ENCODE measurements at regions of chr9 and their contacts with region 1.

Region 1: DNA sequence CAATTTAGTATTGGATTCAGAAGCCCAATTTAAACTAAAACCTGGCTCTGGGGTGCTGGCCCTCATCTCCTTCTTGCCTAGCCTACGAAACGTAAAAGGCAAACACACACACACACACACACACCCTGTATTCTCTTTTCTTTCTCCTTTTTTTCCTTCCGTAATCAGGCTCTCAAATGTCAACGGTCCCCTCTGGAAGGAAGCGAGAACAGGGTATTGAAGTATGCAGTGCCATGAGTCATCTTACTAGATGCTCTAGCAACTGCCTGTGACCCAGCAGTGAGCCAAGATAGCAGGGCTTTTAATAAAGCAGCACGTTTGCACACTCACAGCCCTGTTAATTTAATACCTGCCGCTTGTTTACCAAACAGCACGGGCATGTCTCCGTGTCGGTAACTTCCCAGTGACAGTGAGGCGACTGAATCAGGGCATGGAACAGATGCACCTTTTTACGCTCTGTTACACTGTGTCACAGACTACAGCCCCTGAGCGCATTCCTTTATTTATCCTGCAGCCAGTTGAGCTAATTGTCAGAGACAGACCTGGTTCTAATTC is 243.8 kb downstream of the BNC2 start:
- DNase-seq: no peak
- H3K4me3 ChIP-seq: no peak overlapping the region
- H3K27ac ChIP-seq: no peak overlapping the region
- H3K4me1 ChIP-seq: no peaks in the 10 kb centered on the region
- H3K27me3 ChIP-seq: no peaks in the 10 kb centered on the region
- CTCF ChIP-seq: no peak

Region 2: GRCh38 chr9:16247188-16247875 is 379.3 kb before region 1 on chr9:
- dilution Hi-C with region 1: loop called (anchors 25 kb)
- DNase-seq: peak; percentile 36
- H3K4me3 ChIP-seq: no peak overlapping the region
- H3K27ac ChIP-seq: no peak overlapping the region
- H3K4me1 ChIP-seq: peaks cover 9% of the 10 kb centered on the region
- H3K27me3 ChIP-seq: no peaks in the 10 kb centered on the region
- CTCF ChIP-seq: no peak

Region 3: DNA sequence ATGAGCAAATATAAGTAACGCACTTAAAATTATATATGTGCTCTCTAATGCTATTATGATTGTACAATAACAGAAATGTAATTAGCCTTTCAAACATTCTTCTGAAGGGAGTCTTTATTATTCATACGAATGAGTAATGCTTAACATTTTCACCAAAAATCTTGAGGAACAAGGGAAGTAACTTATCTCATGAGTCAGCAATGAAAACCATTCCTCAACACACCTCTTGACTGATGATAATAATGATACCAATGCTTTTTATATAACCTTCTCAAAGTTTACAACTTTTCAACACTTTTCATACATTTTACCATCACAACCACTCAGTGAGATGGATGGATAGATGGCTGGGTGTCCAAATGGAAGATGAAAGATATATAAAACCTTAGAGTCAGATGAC is 125.5 kb before region 1 on chr9:
- dilution Hi-C with region 1: no loop called
- DNase-seq: peak; percentile 28
- H3K4me3 ChIP-seq: no peak overlapping the region
- H3K27ac ChIP-seq: peak overlapping the region; percentile 51
- H3K4me1 ChIP-seq: peaks cover 24% of the 10 kb centered on the region
- H3K27me3 ChIP-seq: no peaks in the 10 kb centered on the region
- CTCF ChIP-seq: no peak

Region 4: GRCh38 chr9:16768816-16769215 is 142.2 kb after region 1 on chr9:
- dilution Hi-C with region 1: no loop called
- DNase-seq: no peak
- H3K4me3 ChIP-seq: no peak overlapping the region
- H3K27ac ChIP-seq: no peak overlapping the region
- H3K4me1 ChIP-seq: no peaks in the 10 kb centered on the region
- H3K27me3 ChIP-seq: no peaks in the 10 kb centered on the region
- CTCF ChIP-seq: no peak